ENCODE measurements at regions of chr2 and their contacts with region 1.

Region 1: DNA sequence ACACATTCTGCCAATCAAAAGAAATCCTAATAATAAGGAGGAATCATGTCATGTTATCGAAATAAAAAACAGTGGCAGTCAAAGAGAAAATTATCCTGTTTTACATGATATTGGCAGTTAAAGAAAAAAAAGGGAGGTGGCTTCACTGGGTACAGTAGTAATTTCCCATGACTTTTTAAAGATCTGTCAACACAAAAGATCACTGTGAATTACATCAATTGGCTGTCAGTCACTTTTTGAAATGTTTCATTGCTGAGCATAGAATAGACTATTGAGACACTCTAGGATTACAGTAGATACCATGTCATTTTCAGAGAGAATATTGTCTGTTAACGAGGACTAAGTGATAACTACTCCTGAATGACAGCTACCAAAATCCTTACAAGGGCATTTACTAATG is 335.7 kb upstream of the CYP26B1 start:
- DNase-seq: no peak
- H3K4me3 ChIP-seq: no peak overlapping the region
- H3K27ac ChIP-seq: no peak overlapping the region
- H3K4me1 ChIP-seq: no peaks in the 10 kb centered on the region
- H3K27me3 ChIP-seq: no peaks in the 10 kb centered on the region
- CTCF ChIP-seq: no peak
- POLR2A ChIP-seq: no peak

Region 2: GRCh38 chr2:72439892-72440291 is 43.5 kb before region 1 on chr2:
- intact Hi-C with region 1: loop called (anchors 2 kb)
- DNase-seq: no peak
- H3K4me3 ChIP-seq: no peak overlapping the region
- H3K27ac ChIP-seq: no peak overlapping the region
- H3K4me1 ChIP-seq: no peaks in the 10 kb centered on the region
- H3K27me3 ChIP-seq: no peaks in the 10 kb centered on the region
- CTCF ChIP-seq: no peak
- POLR2A ChIP-seq: no peak

Measured in breast epithelium (tissue), 4 donors.